Tibial artery (tissue), 4 donors: ENCODE measurements at regions of chr13 and their contacts with region 1.

Region 1: DNA sequence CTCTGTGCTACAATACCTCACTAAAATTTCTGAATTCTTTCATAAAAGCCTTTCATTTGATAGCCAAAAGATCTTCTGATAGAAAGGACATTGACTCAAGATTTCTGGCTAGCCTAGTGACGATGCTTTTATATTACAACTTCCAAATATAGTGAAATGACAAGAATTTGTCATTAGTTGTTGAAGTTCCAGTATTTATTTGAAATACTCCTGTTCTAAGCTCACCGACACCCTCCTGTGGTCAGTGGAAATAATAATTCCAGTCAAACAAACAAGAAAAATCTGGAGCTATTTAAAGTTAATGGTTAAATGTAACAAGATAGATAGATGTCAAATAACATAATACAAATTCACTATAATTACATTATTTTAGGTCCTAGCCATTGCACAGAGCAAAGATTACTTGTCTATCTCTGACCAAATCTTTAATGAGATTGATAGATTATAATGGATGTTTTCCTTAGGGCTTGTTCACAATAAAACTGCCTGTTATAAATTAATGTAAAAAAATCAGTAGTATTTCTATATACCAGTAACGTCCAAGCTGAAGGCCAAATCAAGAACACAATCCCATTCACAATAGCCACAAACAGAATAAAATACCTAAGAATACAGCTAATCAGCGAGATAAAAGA is 195.5 kb downstream of the RGCC start:
- DNase-seq: no peak
- H3K4me3 ChIP-seq: no peak overlapping the region
- H3K27ac ChIP-seq: peak overlapping the region in 1 of 2 donors; percentile 5
- H3K4me1 ChIP-seq: peaks cover 0 to 17% (median 2%) of the 10 kb centered on the region in 4 donors
- H3K27me3 ChIP-seq: no peaks in the 10 kb centered on the region
- CTCF ChIP-seq: peak; percentile 60 to 77

Region 2: GRCh38 chr13:40886017-40886416 is 766.8 kb before region 1 on chr13:
- intact Hi-C with region 1: no loop called
- DNase-seq: no peak
- H3K4me3 ChIP-seq: no peak overlapping the region
- H3K27ac ChIP-seq: no peak overlapping the region
- H3K4me1 ChIP-seq: peaks cover 0 to 4% (median 0%) of the 10 kb centered on the region in 4 donors
- H3K27me3 ChIP-seq: no peaks in the 10 kb centered on the region
- CTCF ChIP-seq: no peak

Region 3: DNA sequence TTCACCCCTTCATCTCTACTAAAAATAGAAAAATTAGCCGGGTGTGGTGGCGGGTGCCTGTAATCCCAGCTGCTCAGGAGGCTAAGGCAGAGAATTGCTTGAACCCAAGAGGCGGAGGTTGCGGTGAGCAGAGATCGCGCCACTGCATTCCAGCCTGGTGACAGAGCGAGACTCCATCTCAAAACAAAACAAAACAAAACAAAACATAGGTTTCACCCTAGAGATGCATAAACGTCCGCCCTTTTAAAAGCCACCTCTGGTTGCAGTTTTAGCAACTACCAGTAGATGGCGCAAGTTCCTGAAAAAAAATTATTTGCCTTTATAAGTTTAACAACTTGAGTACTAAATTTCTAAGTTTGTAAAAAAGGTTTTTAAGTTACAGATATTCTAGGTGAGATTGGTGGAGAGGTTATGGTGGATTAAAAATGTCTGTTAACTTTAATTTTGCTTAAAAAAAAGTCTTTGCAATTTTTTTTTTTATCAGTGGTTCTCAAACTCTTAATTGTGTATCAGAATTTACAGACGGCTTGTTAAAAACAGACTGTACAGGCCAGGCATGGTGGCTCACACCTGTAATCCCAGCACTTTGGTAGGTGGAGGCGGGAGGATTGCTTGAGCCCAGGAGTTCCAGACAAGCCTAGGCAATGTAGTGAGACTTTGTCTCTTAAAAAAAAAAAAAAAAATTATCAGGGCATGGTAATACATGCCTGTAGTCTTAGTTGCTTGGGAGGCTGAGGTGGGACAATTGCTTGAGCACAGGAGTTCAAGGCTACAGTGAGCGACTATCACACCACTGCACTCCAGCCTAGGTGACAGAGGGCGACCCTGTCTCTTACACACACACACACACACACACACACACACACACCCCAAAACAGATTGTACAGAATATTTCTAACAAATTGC is 299.7 kb before region 1 on chr13:
- intact Hi-C with region 1: loop called (anchors 5 kb)
- DNase-seq: no peak
- H3K4me3 ChIP-seq: no peak overlapping the region
- H3K27ac ChIP-seq: no peak overlapping the region
- H3K4me1 ChIP-seq: no peaks in the 10 kb centered on the region
- H3K27me3 ChIP-seq: no peaks in the 10 kb centered on the region
- CTCF ChIP-seq: peak; percentile 72 to 75